H1 (cell line): ENCODE measurements at regions of chr18 and their contacts with region 1.

Region 1: DNA sequence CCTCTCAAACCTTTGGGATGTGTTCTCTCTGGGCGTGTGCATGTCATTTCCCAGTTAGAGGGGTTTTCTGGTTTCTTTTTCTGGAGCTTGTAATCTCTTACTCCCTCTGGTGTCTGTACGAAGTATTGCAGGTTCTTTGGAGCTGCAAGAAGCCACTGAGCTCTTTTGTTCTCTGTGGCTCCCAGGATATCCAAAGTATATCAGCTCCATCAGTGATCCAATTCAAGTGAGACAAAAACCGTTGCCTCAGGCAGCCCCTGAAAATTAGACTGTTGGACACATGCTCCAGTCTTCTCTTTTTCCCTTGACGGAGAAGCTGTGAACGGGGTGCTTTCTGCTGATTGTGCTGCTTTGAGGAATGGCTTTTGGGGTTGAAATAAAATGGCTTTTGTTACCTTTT is 59.0 kb upstream of the LDLRAD4 start:
- DNase-seq: no peak
- H3K4me3 ChIP-seq: no peak overlapping the region
- H3K27ac ChIP-seq: no peak overlapping the region
- H3K4me1 ChIP-seq: no peaks in the 10 kb centered on the region
- H3K27me3 ChIP-seq: no peaks in the 10 kb centered on the region
- CTCF ChIP-seq: peak in 2 of 3 experiments; percentile 65 to 74; a peak in 3 of 4 replicates
- EP300 ChIP-seq: no peak
- POLR2A ChIP-seq: no peak
- RAD21 ChIP-seq: peak; percentile 66 to 76

Region 2: DNA sequence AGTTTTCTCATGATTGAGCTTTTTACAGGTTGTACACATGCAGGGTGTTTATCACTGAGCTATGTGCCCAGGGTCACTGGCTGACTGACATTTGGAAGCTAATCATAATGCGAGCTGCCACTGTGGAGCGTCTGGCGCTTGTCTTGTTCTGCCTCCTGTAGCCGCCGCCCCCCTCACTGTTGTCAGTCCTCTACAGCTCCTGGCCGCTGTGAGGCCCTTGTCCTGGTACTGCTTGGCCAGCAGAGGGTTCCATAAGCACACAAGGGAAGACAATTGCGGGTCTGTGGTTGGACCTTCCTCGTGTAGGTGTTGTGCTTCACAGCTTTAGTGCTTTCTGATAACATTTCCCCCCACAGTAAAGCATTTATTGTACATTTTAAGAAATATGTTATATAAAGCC is 46.6 kb before region 1 on chr18:
- CTCF ChIA-PET with region 1: interaction called, 19 read pairs
- POLR2A ChIA-PET with region 1: no interaction called
- DNase-seq: peak; percentile 64 to 65
- H3K4me3 ChIP-seq: no peak overlapping the region
- H3K27ac ChIP-seq: no peak overlapping the region
- H3K4me1 ChIP-seq: no peaks in the 10 kb centered on the region
- H3K27me3 ChIP-seq: no peaks in the 10 kb centered on the region
- CTCF ChIP-seq: peak; percentile 64 to 80 (median 76)
- EP300 ChIP-seq: no peak
- POLR2A ChIP-seq: no peak
- RAD21 ChIP-seq: peak; percentile 76 to 83

Region 3: DNA sequence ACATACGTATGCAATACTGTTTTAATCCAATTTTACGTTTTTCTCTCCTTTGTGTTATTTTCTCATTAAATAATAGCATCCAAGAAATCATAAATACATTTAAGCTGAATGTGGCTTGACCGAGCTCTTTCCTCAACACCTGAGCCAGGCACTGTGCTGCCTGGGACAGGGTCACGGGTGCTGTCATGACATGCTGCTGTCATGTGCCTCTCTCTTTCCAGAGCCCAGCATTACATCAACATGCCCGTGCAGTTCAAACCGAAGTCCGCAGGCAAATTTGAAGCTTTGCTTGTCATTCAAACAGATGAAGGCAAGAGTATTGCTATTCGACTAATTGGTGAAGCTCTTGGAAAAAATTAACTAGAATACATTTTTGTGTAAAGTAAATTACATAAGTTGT is 35.2 kb before region 1 on chr18:
- CTCF ChIA-PET with region 1: interaction called, 16 read pairs
- POLR2A ChIA-PET with region 1: no interaction called
- DNase-seq: no peak
- H3K4me3 ChIP-seq: no peak overlapping the region
- H3K27ac ChIP-seq: no peak overlapping the region
- H3K4me1 ChIP-seq: no peaks in the 10 kb centered on the region; a peak in 1 of 7 replicates
- H3K27me3 ChIP-seq: no peaks in the 10 kb centered on the region
- CTCF ChIP-seq: no peak
- EP300 ChIP-seq: no peak
- POLR2A ChIP-seq: no peak
- RAD21 ChIP-seq: no peak

Region 4: DNA sequence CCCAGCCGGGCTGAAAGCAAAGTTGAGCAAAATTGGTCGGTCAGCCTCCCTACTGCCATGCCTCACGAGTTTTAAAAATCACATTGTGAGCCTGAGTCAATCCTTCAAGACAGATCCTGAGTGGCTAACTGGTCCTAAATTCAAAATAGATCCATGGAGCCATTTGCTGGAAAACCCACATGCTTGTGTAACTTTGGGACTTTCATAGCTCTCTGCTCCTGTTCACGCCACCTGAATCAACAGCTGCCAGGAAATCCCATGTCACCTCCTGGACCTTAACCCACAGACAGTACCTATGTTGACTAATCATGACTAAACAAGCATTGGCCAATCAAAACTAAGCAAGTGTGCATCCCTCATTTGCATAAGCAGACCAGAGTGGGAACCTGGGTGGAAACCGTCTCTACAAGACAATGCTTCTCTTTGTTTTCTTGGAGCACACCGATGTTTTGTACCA is 16.2 kb after region 1 on chr18:
- CTCF ChIA-PET with region 1: interaction called, 30 read pairs
- POLR2A ChIA-PET with region 1: no interaction called
- DNase-seq: no peak
- H3K4me3 ChIP-seq: no peak overlapping the region
- H3K27ac ChIP-seq: no peak overlapping the region
- H3K4me1 ChIP-seq: peaks cover 0 to 3% (median 0%) of the 10 kb centered on the region in 4 experiments; a peak in 1 of 7 replicates
- H3K27me3 ChIP-seq: no peaks in the 10 kb centered on the region
- CTCF ChIP-seq: no peak
- EP300 ChIP-seq: no peak
- POLR2A ChIP-seq: no peak
- RAD21 ChIP-seq: no peak